ENCODE measurements at regions of chr2 and their contacts with region 1.

Region 1: DNA sequence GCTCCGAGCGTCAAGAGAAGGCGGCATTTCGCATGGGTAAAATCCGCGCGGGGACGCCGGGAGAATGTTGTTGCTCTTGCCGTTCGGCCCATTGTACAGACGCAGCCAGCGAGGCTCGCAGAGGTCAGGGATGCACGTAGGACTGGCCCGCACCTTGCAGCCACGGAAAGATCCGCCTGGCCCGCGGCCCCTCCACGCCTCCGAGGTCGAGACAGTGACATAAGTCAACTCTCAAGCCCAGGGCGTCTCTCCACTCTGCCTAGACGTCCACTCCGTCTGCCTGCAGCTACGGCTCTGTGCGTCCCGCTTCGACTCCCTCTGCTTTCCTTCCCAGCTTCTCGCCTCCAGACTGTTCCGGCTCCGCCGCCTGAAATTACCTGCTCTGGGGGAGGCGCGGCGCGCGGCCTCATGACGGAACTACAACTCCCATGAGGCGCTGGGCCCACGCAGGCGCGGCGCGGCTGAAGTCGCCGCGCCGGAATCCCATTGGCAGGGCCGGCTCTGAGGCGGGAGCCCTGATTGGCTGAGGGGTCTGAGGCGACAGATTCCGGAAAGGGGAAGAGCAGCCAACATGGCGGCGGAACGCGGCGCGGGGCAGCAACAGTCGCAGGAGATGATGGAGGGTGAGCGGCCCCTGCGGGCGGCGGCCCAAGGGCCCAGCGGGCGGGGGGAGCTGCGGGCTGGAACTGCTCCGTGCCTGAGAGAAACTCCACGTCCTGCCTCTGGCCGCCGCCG is at the start of gene PPP1R7:
- DNase-seq: peak; percentile 97
- total RNA-seq, gene PPP1R7: 77.7 TPM

Region 2: GRCh38 chr2:241102239-241102803 is 47.8 kb before region 1 on chr2 and contains the start of gene MTERF4:
- intact Hi-C with region 1: loop called (anchors 2 kb)
- DNase-seq: peak; percentile 93
- total RNA-seq, gene MTERF4: 21.0 TPM

Region 3: DNA sequence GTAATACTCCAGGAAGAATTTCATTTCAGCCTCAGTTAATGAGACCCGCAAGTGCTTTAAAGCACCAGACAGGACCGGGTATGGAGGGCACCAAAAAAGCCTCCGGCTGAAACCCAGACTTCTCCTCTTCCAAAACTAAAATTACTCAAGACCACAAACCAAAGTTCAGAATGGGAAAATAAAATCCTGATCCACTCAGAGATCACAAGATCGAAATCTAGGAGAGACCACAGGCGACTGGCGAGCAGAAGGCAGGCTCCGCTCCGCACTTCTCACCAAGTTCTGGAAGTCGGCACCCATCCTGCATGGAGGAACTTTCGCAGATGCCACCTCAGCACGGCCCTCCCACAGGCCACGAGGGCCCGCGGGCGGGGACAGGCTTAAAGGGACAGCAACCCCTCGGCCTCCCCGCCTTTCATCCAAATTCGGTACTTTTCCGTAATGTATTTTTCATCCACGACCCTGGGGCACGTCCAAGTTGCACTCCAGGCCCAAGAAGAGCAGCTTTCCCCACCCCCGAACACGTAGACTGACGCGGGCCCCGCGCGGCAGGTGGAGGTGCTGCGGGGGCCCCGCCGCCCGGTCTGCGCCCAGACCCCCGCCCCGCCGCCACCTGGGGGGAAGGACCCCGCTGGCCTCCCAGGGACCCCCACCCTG is 121.7 kb after region 1 on chr2:
- intact Hi-C with region 1: loop called (anchors 5 kb)
- DNase-seq: peak; percentile 94

Measured in cardiac septum (tissue), 1 donor.